ENCODE measurements at regions of chr19 and their contacts with region 1.

Region 1: GRCh38 chr19:18683213-18683939 is at the start of gene CRTC1:
- DNase-seq: peak; percentile 93 to 97
- ATAC-seq: peak; percentile 86
- H3K4me3 ChIP-seq: peak within 1 kb of the TSS; percentile 43 to 46
- H3K27ac ChIP-seq: peak within 1 kb of the TSS in 1 of 2 donors; percentile 42
- H3K4me1 ChIP-seq: no peaks in the 10 kb centered on the region
- H3K27me3 ChIP-seq: no peaks in the 10 kb centered on the region
- total RNA-seq, gene CRTC1: 9.5 to 16.5 TPM

Region 2: GRCh38 chr19:18571564-18572300 is 111.6 kb before region 1 on chr19 and contains the start of gene UBA52:
- intact Hi-C with region 1: no loop called
- DNase-seq: peak; percentile 99 to 100
- ATAC-seq: peak; percentile 96
- H3K4me3 ChIP-seq: peak within 1 kb of the TSS; percentile 80 to 94
- H3K27ac ChIP-seq: peak within 1 kb of the TSS in 1 of 2 donors; percentile 77
- H3K4me1 ChIP-seq: peaks cover 0 to 3% of the 10 kb centered on the region in 2 donors
- H3K27me3 ChIP-seq: no peaks in the 10 kb centered on the region
- total RNA-seq, gene UBA52: 750 to 787 TPM

Region 3: DNA sequence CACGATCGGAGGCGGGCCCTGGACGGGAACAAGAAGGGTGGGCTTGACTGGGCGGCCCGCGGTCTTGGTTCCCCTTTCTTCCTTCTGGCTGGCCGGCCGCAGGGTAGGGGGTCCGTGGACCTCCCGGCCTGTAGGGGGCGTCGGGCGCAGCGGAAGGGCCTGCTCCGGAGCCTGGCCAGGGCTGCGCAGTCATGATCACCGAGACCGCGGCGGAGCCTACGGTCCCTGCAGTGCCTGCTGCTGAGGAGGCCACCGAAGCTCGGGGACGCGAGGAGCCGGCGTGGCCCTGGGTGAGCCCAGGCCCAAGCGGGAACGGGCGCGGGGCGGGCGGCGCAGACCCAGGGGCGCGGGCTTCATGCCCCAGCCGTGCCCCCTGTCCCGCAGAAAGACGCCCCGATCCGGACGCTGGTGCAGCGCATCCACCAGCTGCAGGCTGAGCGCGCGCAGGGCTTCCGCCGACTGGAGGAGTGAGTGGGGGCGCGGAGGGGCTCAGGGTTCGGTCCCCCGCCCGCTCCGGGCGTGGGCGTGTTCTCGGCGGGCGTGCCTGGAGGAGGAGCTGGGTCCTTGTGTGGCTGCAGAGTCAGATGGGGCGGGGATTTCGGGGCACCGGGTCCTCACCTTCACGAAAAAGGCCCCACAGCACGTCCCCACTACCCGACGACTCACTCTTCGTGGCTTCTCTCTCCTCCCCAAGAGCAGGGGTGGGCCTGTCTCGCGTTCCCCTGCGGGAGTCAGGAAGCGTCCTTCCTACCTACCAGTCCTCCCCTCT is 94.6 kb before region 1 on chr19 and contains the start of gene REX1BD:
- intact Hi-C with region 1: loop called in 1 of 2 experiments (anchors 5 kb)
- DNase-seq: peak; percentile 95
- ATAC-seq: peak; percentile 92
- H3K4me3 ChIP-seq: peak within 1 kb of the TSS; percentile 68 to 80
- H3K27ac ChIP-seq: peak within 1 kb of the TSS in 1 of 2 donors; percentile 79
- H3K4me1 ChIP-seq: no peaks in the 10 kb centered on the region
- H3K27me3 ChIP-seq: no peaks in the 10 kb centered on the region
- total RNA-seq, gene REX1BD: 33.3 to 67.1 TPM

Region 4: GRCh38 chr19:18636183-18636968 is 47.0 kb before region 1 on chr19:
- intact Hi-C with region 1: loop called in 1 of 2 experiments (anchors 5 kb)
- DNase-seq: peak; percentile 99 to 100
- ATAC-seq: peak; percentile 98
- H3K4me3 ChIP-seq: peak overlapping the region in 1 of 2 donors; percentile 52
- H3K27ac ChIP-seq: peak overlapping the region in 1 of 2 donors; percentile 45
- H3K4me1 ChIP-seq: no peaks in the 10 kb centered on the region
- H3K27me3 ChIP-seq: no peaks in the 10 kb centered on the region

Region 5: DNA sequence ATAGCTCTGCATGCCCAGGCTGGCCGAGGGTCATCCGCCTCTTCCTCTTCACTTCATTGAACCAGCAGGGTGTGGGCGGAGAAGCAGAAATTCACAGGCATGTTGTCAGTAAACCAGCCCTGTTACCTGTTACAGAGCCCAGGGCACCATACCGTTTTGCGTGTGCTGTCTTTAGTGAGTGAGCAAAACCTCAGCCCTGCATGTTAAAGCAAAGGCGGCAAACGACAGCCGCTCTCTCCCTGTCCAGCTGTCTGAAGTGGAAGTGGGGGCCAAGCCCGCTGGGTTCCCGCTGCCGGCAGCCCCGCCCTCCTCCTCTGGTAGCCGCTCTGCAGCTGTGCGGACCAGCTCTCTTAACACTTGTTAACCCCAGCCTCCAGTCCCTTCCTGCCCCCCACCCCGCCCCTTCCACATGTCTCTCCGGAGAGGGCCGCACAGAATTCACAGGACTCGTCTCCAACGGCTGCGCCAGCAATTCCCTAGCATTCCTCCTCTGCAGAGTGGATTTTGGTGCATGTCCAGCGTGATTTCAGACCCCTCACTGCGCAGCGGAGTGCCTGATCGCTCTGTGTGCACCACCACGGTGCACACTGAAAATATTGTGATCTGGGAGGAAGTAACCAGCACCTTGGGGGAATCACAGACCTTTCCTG is 33.9 kb before region 1 on chr19:
- intact Hi-C with region 1: no loop called
- DNase-seq: peak; percentile 85 to 86
- ATAC-seq: peak; percentile 70
- H3K4me3 ChIP-seq: no peak overlapping the region
- H3K27ac ChIP-seq: peak overlapping the region in 1 of 2 donors; percentile 85
- H3K4me1 ChIP-seq: no peaks in the 10 kb centered on the region
- H3K27me3 ChIP-seq: no peaks in the 10 kb centered on the region

Region 6: DNA sequence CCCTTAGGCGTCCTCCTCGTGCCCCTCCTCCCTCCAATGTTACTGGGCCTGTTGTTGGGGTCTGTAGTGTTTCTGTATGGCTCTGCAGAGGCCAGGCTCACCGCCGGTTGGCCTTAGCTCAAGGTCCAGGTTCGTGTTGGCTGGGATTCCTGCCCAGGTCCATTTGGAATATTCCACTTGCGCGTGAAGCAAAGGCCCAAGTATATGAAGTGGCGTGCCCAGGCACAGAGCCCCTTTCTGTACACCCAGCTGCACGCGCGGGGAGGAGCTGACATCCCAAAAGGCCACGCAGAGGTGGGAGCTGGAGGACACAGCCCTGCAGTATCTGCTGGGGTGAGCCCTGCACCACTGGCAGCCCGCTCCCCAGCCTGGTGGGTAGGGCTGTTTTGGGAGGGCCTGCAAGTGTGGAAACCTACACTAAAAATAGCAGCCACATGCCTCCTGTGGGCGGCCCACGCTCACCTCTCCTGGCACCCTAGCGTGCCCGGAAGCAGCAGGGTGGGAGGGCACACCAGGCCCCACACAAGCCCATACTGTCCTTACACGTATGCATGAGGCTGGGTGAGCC is 30.3 kb after region 1 on chr19:
- intact Hi-C with region 1: loop called in 1 of 2 experiments (anchors 2 kb)
- DNase-seq: no peak
- ATAC-seq: no peak
- H3K4me3 ChIP-seq: no peak overlapping the region
- H3K27ac ChIP-seq: no peak overlapping the region
- H3K4me1 ChIP-seq: no peaks in the 10 kb centered on the region
- H3K27me3 ChIP-seq: no peaks in the 10 kb centered on the region